Astrocyte of the cerebellum (primary cell): ENCODE measurements at regions of chr20 and their contacts with region 1.

Region 1: DNA sequence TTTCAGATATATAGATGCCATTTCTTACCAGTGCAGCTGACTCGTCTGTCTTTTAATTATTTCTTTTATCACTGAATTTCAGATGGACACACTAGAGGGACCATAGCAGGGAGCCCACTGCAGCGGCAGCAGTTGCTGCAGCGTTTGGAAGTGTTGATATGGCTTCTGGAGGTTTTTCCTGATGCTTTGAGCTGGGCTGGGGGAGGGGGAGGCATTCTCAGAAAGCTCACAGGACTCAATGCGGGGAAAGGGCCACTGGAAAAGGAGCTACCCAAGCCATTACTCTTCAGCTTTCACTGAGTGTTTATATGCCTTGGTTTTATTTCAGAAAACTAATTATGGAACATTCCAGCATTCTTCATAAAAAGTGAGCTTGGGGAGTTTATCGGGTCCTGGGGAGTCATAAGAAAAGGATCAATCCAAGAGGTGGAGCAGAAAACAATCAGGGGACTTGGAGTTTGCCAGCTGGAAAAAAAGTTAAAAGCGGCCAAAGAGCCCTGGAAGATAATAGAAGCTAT is 740.4 kb upstream of the FLRT3 start:
- DNase-seq: no peak
- H3K4me3 ChIP-seq: no peak overlapping the region
- CTCF ChIP-seq: no peak

Region 2: DNA sequence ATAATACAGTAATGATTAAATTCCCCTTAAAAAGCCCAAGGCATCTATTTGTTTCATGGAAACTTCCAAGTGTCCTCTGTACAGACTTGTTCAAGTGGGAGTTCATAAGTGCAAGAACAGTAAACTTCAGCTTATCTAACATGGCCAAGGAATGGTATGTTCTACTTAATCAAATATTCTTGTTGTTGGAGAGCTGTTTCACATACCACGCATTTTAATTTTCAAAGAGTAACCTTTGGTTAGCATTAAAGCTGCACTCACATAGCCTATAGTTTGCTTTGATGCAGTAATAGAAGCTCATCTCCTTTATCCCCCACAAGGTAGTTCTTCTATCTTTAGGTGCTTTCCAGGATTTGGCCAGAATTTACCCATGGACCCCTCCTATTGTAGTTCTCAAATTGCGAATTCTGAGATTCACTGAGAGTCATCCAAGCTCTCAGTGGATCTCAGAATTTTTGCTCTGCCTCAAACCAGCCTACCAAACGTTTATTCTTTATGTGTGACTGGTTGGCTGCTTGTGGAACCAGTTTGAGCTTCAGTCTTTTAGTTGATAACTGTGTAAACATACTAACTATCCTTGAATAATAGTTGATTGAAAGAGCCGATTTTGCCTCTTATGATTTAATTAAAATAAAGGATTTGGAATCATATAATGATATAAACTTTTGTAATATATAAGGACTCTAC is 72.3 kb before region 1 on chr20:
- in situ Hi-C with region 1: loop called (anchors 5 kb)
- DNase-seq: no peak
- H3K4me3 ChIP-seq: no peak overlapping the region
- CTCF ChIP-seq: no peak